B cell (primary cell): ENCODE measurements at regions of chr9 and their contacts with region 1.

Region 1: DNA sequence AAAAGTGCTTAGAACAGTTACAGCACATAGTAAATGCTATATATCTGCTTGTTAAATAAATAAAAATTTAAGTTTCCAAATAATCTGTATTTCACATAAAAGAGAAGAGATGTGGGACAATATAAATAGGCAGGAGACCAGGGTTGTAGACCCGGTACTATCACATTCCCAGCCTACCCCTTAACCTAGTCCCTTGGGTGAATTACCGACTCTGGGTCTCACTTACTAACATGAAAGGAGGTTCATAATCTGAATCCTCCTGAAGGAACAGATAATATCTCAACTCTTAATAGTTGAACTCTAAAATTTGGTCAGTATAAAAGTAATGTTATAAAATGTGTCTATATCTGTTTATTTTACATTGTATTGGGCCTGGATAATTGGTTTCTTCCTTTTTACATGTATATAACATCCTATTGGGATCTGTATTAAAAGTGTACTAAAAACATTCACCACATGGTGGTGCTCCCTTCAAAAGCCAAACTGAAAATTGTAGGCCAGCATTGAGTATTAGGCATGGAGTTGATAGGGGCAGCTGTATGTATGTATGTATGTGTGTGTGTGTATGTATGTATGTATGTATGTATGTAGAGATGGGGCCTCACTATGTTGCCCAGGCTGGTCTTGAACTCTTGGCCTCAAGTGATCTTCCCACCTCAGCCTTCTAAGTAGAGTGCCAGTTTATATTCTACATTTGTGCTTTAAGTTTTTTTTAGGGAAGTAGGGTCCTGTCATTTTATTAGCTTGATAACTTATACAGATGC is 64.2 kb upstream of the ABL1 start:
- DNase-seq: peak; percentile 50
- ATAC-seq: no peak
- H3K4me3 ChIP-seq: no peak overlapping the region
- H3K4me3 Mint-ChIP-seq: no peak overlapping the region
- H3K27ac ChIP-seq: no peak overlapping the region
- H3K27ac Mint-ChIP-seq: no peak overlapping the region
- H3K4me1 ChIP-seq: peaks cover 15 to 22% of the 10 kb centered on the region in 2 donors
- H3K4me1 Mint-ChIP-seq: peaks cover 37% of the 10 kb centered on the region
- H3K27me3 ChIP-seq: no peaks in the 10 kb centered on the region
- H3K27me3 Mint-ChIP-seq: no peaks in the 10 kb centered on the region
- CTCF ChIP-seq: peak; percentile 69

Region 2: DNA sequence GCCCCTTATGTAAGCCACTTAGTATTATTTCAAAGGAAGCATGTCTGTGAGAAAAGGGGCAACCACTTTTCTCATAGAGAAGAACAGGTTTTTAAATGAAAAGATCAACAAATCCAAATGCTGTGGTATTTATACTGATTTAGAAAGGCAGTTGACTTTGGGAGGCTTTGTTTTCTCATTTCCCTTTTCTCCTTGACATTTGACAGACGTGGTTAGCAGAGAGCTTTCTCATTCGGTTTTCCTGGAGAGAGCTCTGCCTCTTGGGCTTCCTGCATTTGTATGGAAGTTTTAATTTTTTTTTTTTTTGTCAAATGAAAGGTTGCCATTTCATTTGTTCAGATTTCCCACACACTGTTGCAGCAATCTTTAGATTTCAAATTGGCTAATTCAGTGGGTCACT is 14.8 kb before region 1 on chr9:
- CTCF ChIA-PET with region 1: no interaction called
- POLR2A ChIA-PET with region 1: no interaction called
- intact Hi-C with region 1: no loop called
- DNase-seq: no peak
- ATAC-seq: no peak
- H3K4me3 ChIP-seq: no peak overlapping the region
- H3K4me3 Mint-ChIP-seq: no peak overlapping the region
- H3K27ac ChIP-seq: no peak overlapping the region
- H3K27ac Mint-ChIP-seq: no peak overlapping the region
- H3K4me1 ChIP-seq: peaks cover 7 to 12% of the 10 kb centered on the region in 2 donors
- H3K4me1 Mint-ChIP-seq: peaks cover 24% of the 10 kb centered on the region
- H3K27me3 ChIP-seq: no peaks in the 10 kb centered on the region
- H3K27me3 Mint-ChIP-seq: no peaks in the 10 kb centered on the region
- CTCF ChIP-seq: no peak

Region 3: DNA sequence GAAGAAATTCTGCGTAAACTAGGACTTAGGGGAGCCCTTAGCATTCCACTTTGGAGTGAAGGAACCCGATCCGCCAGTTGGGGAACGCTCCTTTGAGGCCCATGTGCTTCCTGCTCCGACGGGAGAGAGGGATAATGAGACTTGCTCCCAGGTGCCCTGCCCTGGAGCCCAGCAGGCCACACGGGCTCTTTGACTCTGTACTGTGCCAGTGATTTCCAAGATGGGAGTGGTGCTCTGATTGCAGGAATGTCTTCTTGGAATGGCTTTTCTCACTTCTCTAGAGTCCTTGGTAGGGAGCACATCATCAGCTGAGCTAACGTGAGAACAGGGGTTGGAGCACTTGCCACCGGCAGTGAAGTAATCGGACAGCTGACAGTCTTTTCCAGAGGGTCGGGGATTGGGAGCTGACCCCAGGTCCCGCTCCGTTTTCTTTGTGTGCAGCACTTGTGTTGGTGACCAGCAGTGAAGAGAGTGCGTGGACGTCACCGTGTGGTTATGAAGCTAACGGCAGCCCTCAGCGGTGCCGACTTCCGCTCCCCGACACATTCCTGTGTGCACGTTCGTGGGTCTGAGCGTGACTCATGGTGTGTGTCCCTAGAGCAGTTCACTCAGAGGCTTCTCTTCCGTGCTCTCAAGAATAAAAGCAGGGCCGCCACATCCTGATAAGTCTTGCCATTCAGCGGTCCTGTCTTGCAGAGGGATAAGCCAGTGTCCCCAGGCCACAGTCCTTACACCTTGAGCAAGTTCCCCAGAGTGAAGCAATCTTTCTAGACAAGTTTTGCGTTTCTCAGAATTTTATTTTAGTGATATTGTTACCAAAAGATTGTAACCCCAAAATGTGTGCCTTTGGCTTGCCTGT is 89.8 kb after region 1 on chr9:
- CTCF ChIA-PET with region 1: interaction called, 11 read pairs
- POLR2A ChIA-PET with region 1: no interaction called
- intact Hi-C with region 1: loop called (anchors 1 kb)
- DNase-seq: no peak
- ATAC-seq: no peak
- H3K4me3 ChIP-seq: no peak overlapping the region
- H3K4me3 Mint-ChIP-seq: no peak overlapping the region
- H3K27ac ChIP-seq: no peak overlapping the region
- H3K27ac Mint-ChIP-seq: no peak overlapping the region
- H3K4me1 ChIP-seq: no peaks in the 10 kb centered on the region
- H3K4me1 Mint-ChIP-seq: no peaks in the 10 kb centered on the region
- H3K27me3 ChIP-seq: no peaks in the 10 kb centered on the region
- H3K27me3 Mint-ChIP-seq: no peaks in the 10 kb centered on the region
- CTCF ChIP-seq: no peak

Region 4: GRCh38 chr9:130940693-130941576 is 170.1 kb after region 1 on chr9:
- CTCF ChIA-PET with region 1: interaction called, 4 read pairs
- POLR2A ChIA-PET with region 1: no interaction called
- intact Hi-C with region 1: loop called (anchors 2 kb)
- DNase-seq: peak; percentile 76
- ATAC-seq: peak; percentile 84
- H3K4me3 ChIP-seq: peak overlapping the region in 1 of 5 experiments; percentile 19
- H3K4me3 Mint-ChIP-seq: peak overlapping the region; percentile 47
- H3K27ac ChIP-seq: no peak overlapping the region
- H3K27ac Mint-ChIP-seq: no peak overlapping the region
- H3K4me1 ChIP-seq: peaks cover 19 to 32% of the 10 kb centered on the region in 2 donors
- H3K4me1 Mint-ChIP-seq: peaks cover 21% of the 10 kb centered on the region
- H3K27me3 ChIP-seq: peaks cover 0 to 53% (median 27%) of the 10 kb centered on the region in 4 experiments
- H3K27me3 Mint-ChIP-seq: peaks cover 55% of the 10 kb centered on the region
- CTCF ChIP-seq: peak; percentile 89